GM12878 (cell line): ENCODE measurements at regions of chr1 and their contacts with region 1.

Region 1: DNA sequence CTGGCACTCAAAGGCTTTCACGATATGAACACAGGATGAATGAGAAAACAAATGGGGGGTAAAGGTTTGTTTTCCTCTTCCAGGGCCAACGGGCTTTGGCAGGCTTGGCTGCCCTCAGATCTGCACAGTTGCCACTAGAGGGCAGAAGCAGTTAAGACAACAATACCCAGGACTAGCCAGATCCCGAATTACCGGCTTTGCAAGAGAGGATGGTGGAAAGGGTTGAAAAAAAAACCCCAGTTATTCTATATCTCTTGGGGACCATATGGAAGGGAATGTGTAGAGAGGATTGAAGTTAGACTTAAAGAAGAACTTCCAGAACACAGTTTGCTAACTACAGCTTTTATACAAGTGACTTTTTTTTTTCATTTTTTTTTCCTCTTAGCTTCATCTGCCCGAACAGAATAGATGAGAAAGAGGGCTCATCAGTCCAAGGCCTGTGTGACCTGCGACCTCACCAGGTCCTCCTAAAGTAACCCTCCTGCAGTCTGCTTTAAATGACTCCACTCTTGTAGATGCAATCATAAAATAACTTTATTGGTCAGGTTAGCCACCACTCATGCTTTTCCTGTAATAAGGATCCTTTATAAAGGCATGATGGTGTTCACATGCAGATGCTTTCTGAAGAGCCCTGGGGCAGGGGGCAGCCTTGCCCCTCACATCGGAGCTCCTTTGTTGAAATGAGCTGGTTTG is 10.7 kb downstream of the FMOD start:
- DNase-seq: no peak
- ATAC-seq: peak; percentile 86
- H3K4me3 ChIP-seq: no peak overlapping the region
- H3K27ac ChIP-seq: no peak overlapping the region
- H3K4me1 ChIP-seq: no peaks in the 10 kb centered on the region
- H3K27me3 ChIP-seq: peaks cover 0 to 6% of the 10 kb centered on the region in 2 experiments; a peak in 1 of 4 replicates
- CTCF ChIP-seq: peak; percentile 84 to 95 (median 92)
- EP300 ChIP-seq: no peak
- POLR2A ChIP-seq: no peak
- RAD21 ChIP-seq: peak; percentile 96

Region 2: DNA sequence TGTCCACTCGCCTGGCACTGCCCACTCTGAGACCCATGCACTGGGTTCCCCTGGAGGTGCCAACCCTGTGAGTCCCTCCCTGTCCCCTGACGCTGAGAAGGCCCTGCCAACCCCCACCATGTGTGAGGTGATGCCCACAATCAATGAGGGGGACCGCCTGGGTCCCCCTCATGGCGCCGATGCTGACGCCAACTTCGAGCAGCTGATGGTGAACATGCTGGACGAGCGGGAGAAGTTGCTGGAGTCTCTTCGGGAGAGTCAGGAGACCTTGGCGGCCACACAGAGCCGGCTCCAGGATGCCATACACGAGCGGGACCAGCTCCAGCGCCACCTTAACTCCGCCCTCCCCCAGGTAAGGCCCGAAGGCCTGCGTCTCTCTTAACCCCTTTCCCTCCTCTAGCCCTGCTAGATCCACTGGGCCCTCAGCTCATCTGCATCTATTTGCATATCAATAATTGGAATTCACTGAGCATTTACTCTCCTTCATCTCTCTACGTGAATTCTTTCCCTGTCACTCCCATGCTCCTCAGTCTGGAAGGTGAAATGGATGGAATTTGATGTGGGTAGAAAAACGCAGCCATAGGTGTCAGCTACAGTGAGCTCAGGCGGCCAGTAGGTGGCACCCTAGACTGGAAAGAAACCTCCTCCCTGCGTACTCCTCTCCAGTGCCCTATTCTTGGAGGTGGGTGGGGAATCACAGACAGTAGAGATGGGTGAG is 301.2 kb before region 1 on chr1:
- CTCF ChIA-PET with region 1: interaction called, 6 read pairs
- POLR2A ChIA-PET with region 1: no interaction called
- RAD21 ChIA-PET with region 1: no interaction called
- SMC1A ChIA-PET with region 1: no interaction called
- in situ Hi-C with region 1: no loop called
- intact Hi-C with region 1: loop called (anchors 10 kb)
- DNase-seq: no peak
- ATAC-seq: peak; percentile 91
- H3K4me3 ChIP-seq: no peak overlapping the region
- H3K27ac ChIP-seq: no peak overlapping the region
- H3K4me1 ChIP-seq: peaks cover 11% of the 10 kb centered on the region
- H3K27me3 ChIP-seq: no peaks in the 10 kb centered on the region
- CTCF ChIP-seq: peak; percentile 88 to 91 (median 89)
- EP300 ChIP-seq: no peak
- POLR2A ChIP-seq: no peak
- RAD21 ChIP-seq: peak; percentile 79

Region 3: DNA sequence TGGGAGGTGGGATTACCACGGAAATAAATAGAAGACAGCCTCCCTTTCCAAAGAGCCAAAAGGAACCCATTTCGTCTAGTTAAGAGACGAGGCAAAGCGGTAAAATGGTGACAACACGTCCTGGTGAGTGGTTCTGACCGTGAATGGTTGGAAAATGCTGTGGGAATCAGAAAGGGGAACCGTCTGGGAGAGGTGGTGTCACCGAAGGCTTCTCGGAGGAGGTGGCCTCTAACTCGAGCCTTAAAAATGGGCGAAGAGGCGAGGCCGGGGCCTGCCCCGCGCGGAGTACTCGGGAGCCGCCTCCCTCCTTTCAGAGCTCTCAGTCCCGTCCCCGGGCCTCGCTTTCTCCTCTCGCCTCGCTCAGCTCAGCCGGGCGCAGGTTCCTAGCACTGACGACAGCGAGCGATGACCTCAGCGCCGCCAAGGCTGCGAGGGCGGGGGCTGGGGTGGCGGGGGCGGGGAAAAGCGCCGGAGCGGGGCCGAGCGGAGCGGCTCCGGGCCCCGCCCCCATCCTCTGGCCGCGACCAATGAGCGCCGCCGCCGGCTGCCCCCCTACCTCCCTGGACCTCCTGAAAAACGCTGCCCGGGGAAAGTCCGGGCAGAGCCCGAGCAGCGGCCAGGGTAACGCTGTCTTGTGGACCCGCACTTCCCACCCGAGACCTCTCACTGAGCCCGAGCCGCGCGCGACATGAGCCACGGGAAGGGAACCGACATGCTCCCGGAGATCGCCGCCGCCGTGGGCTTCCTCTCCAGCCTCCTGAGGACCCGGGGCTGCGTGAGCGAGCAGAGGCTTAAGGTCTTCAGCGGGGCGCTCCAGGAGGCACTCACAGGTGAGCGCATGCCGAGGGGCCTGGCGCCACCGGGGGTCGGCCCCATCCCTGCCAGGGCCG is 35.1 kb before region 1 on chr1 and contains the start of gene BTG2:
- CTCF ChIA-PET with region 1: interaction called, 194 read pairs
- POLR2A ChIA-PET with region 1: interaction called, 48 read pairs
- RAD21 ChIA-PET with region 1: interaction called, 97 read pairs
- SMC1A ChIA-PET with region 1: interaction called, 171 read pairs
- in situ Hi-C with region 1: no loop called
- intact Hi-C with region 1: no loop called
- DNase-seq: no peak
- ATAC-seq: peak; percentile 82
- H3K4me3 ChIP-seq: peak within 1 kb of the TSS; percentile 97
- H3K27ac ChIP-seq: peak within 1 kb of the TSS; percentile 91
- H3K4me1 ChIP-seq: peaks cover 38% of the 10 kb centered on the region
- H3K27me3 ChIP-seq: no peaks in the 10 kb centered on the region
- CTCF ChIP-seq: no peak
- EP300 ChIP-seq: no peak
- POLR2A ChIP-seq: peak; percentile 98
- RAD21 ChIP-seq: 0 out of 2 replicates have a peak, but pooled peaks have one; percentile 8
- polyA plus RNA-seq, gene BTG2: 23.3 to 37.2 TPM

Region 4: GRCh38 chr1:203361945-203362719 is 21.9 kb after region 1 on chr1:
- CTCF ChIA-PET with region 1: interaction called, 184 read pairs
- POLR2A ChIA-PET with region 1: interaction called, 3 read pairs
- RAD21 ChIA-PET with region 1: interaction called, 6 read pairs
- SMC1A ChIA-PET with region 1: interaction called, 21 read pairs
- in situ Hi-C with region 1: no loop called
- intact Hi-C with region 1: no loop called
- DNase-seq: no peak
- ATAC-seq: peak; percentile 91
- H3K4me3 ChIP-seq: no peak overlapping the region
- H3K27ac ChIP-seq: no peak overlapping the region
- H3K4me1 ChIP-seq: no peaks in the 10 kb centered on the region
- H3K27me3 ChIP-seq: peaks cover 0 to 5% of the 10 kb centered on the region in 2 experiments; a peak in 3 of 4 replicates
- CTCF ChIP-seq: no peak
- EP300 ChIP-seq: no peak
- POLR2A ChIP-seq: no peak
- RAD21 ChIP-seq: no peak

Region 5: GRCh38 chr1:203440771-203441170 is 100.5 kb after region 1 on chr1:
- CTCF ChIA-PET with region 1: interaction called, 429 read pairs
- POLR2A ChIA-PET with region 1: interaction called, 3 read pairs
- RAD21 ChIA-PET with region 1: interaction called, 259 read pairs
- SMC1A ChIA-PET with region 1: interaction called, 295 read pairs
- in situ Hi-C with region 1: loop called (anchors 5 kb)
- intact Hi-C with region 1: loop called (anchors 1 kb)
- DNase-seq: no peak
- ATAC-seq: peak; percentile 95
- H3K4me3 ChIP-seq: no peak overlapping the region
- H3K27ac ChIP-seq: no peak overlapping the region
- H3K4me1 ChIP-seq: no peaks in the 10 kb centered on the region
- H3K27me3 ChIP-seq: peaks cover 0 to 3% of the 10 kb centered on the region in 2 experiments; a peak in 2 of 4 replicates
- CTCF ChIP-seq: peak; percentile 31 to 77 (median 52); a peak in 4 of 6 replicates
- EP300 ChIP-seq: no peak
- POLR2A ChIP-seq: no peak
- RAD21 ChIP-seq: peak; percentile 82

Region 6: GRCh38 chr1:203475012-203475981 is 135.0 kb after region 1 on chr1 and contains the start of gene PRELP:
- CTCF ChIA-PET with region 1: interaction called, 62 read pairs
- POLR2A ChIA-PET with region 1: interaction called, 6 read pairs
- RAD21 ChIA-PET with region 1: interaction called, 8 read pairs
- SMC1A ChIA-PET with region 1: interaction called, 13 read pairs
- in situ Hi-C with region 1: no loop called
- intact Hi-C with region 1: no loop called
- DNase-seq: no peak
- ATAC-seq: no peak
- H3K4me3 ChIP-seq: no peak within 1 kb of the TSS
- H3K27ac ChIP-seq: no peak within 1 kb of the TSS
- H3K4me1 ChIP-seq: peaks cover 9% of the 10 kb centered on the region; the same call in 1 of the 2 replicates
- H3K27me3 ChIP-seq: peaks cover 2 to 6% of the 10 kb centered on the region in 2 experiments; a peak in 2 of 4 replicates
- CTCF ChIP-seq: no peak
- EP300 ChIP-seq: no peak
- POLR2A ChIP-seq: no peak
- RAD21 ChIP-seq: no peak
- polyA plus RNA-seq, gene PRELP: not detected

Region 7: GRCh38 chr1:203504397-203505250 is 164.4 kb after region 1 on chr1:
- CTCF ChIA-PET with region 1: interaction called, 27 read pairs
- POLR2A ChIA-PET with region 1: no interaction called
- RAD21 ChIA-PET with region 1: interaction called, 5 read pairs
- SMC1A ChIA-PET with region 1: interaction called, 6 read pairs
- in situ Hi-C with region 1: no loop called
- intact Hi-C with region 1: no loop called
- DNase-seq: peak; percentile 20
- ATAC-seq: peak; percentile 93
- H3K4me3 ChIP-seq: no peak overlapping the region
- H3K27ac ChIP-seq: no peak overlapping the region
- H3K4me1 ChIP-seq: no peaks in the 10 kb centered on the region
- H3K27me3 ChIP-seq: no peaks in the 10 kb centered on the region; a peak in 1 of 4 replicates
- CTCF ChIP-seq: peak; percentile 72 to 73 (median 72)
- EP300 ChIP-seq: no peak
- POLR2A ChIP-seq: no peak
- RAD21 ChIP-seq: peak; percentile 84